ENCODE measurements at regions of chr3 and their contacts with region 1.

Region 1: DNA sequence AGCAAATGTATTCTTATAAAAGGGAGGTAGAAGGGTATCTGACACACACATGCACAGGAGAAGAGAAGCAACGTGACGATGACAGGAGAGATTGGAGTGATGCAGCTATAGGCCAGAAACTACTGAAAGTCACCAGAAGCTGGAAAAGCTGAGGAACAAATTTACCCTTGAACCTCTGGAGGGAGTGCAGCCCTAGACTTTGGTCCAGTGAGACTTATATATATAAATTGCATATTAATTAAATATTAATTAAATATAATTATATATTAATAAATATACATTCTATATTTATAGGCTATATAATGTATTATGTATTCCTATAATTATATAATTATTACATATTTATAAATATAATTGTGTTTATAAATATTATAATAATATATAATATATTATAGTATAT is 96.5 kb upstream of the LMCD1 start:
- DNase-seq: no peak
- H3K4me3 Mint-ChIP-seq: no peak overlapping the region
- H3K27ac Mint-ChIP-seq: no peak overlapping the region
- H3K4me1 Mint-ChIP-seq: no peaks in the 10 kb centered on the region
- H3K27me3 Mint-ChIP-seq: peaks cover 4% of the 10 kb centered on the region

Region 2: GRCh38 chr3:7764115-7764514 is 641.0 kb before region 1 on chr3:
- CTCF ChIA-PET with region 1: no interaction called
- POLR2A ChIA-PET with region 1: no interaction called
- intact Hi-C with region 1: no loop called
- DNase-seq: no peak
- H3K4me3 Mint-ChIP-seq: no peak overlapping the region
- H3K27ac Mint-ChIP-seq: no peak overlapping the region
- H3K4me1 Mint-ChIP-seq: no peaks in the 10 kb centered on the region
- H3K27me3 Mint-ChIP-seq: no peaks in the 10 kb centered on the region

Region 3: GRCh38 chr3:8416965-8417364 is 11.8 kb after region 1 on chr3:
- CTCF ChIA-PET with region 1: interaction called, 14 read pairs
- POLR2A ChIA-PET with region 1: no interaction called
- intact Hi-C with region 1: no loop called
- DNase-seq: no peak
- H3K4me3 Mint-ChIP-seq: no peak overlapping the region
- H3K27ac Mint-ChIP-seq: no peak overlapping the region
- H3K4me1 Mint-ChIP-seq: peaks cover 9% of the 10 kb centered on the region
- H3K27me3 Mint-ChIP-seq: no peaks in the 10 kb centered on the region